ENCODE measurements at regions of chr4 and their contacts with region 1.

Region 1: DNA sequence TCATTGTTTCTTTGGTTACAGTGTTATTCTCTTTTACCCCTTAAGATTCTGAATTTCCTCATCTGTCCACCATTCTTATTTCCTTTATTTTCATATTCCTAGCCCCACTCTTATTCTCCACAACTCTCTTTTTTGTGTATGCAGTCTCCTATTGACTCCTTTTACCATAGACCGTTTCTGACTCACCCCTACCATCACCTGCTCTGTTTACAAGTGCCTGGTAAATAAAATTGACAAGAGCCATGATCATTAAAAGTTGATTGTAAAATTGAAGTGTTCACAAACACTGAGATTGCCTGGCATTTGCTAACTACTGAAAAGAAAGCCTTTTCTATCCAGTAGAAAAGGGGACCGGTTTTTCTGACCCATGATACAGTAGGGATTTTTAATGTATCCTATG is 54.4 kb downstream of the MRPL1 start:
- DNase-seq: no peak
- ATAC-seq: no peak
- H3K4me3 ChIP-seq: no peak overlapping the region
- H3K27ac ChIP-seq: no peak overlapping the region
- H3K4me1 ChIP-seq: peaks cover 6% of the 10 kb centered on the region
- H3K27me3 ChIP-seq: no peaks in the 10 kb centered on the region
- CTCF ChIP-seq: no peak

Region 2: GRCh38 chr4:77681792-77682191 is 235.3 kb before region 1 on chr4:
- CTCF ChIA-PET with region 1: no interaction called
- POLR2A ChIA-PET with region 1: no interaction called
- in situ Hi-C with region 1: no loop called
- intact Hi-C with region 1: no loop called
- DNase-seq: no peak
- ATAC-seq: no peak
- H3K4me3 ChIP-seq: no peak overlapping the region
- H3K27ac ChIP-seq: no peak overlapping the region
- H3K4me1 ChIP-seq: no peaks in the 10 kb centered on the region
- H3K27me3 ChIP-seq: no peaks in the 10 kb centered on the region
- CTCF ChIP-seq: no peak

Region 3: DNA sequence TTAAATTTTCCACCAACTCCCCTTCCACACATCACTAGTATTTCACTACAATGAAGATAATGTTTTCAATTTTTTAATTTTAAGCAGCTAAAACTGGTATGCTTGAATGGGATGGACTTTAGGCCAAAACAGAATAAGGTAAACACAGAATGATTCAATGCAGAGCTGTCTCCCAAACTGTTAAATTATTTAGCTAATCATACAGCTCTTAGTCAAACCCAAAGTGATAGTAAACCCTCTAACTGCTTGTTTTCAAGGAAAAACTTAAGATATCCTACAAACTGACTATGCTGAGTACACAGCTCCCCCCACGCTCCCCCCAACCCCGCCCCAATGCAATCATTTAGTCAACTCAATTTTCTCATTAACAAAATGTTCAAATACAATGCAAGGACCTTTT is 128.1 kb before region 1 on chr4:
- CTCF ChIA-PET with region 1: no interaction called
- POLR2A ChIA-PET with region 1: interaction called, 10 read pairs
- in situ Hi-C with region 1: no loop called
- intact Hi-C with region 1: no loop called
- DNase-seq: no peak
- ATAC-seq: no peak
- H3K4me3 ChIP-seq: no peak overlapping the region
- H3K27ac ChIP-seq: no peak overlapping the region
- H3K4me1 ChIP-seq: no peaks in the 10 kb centered on the region
- H3K27me3 ChIP-seq: no peaks in the 10 kb centered on the region
- CTCF ChIP-seq: no peak

Region 4: GRCh38 chr4:77800483-77801259 is 116.4 kb before region 1 on chr4:
- CTCF ChIA-PET with region 1: no interaction called
- POLR2A ChIA-PET with region 1: no interaction called
- in situ Hi-C with region 1: no loop called
- intact Hi-C with region 1: no loop called
- DNase-seq: no peak
- ATAC-seq: no peak
- H3K4me3 ChIP-seq: no peak overlapping the region
- H3K27ac ChIP-seq: no peak overlapping the region
- H3K4me1 ChIP-seq: no peaks in the 10 kb centered on the region
- H3K27me3 ChIP-seq: no peaks in the 10 kb centered on the region
- CTCF ChIP-seq: no peak